T-cell (primary cell): ENCODE measurements at regions of chr3 and their contacts with region 1.

Region 1: GRCh38 chr3:171543759-171544654 is 83.8 kb upstream of the TNIK start:
- DNase-seq: no peak
- ATAC-seq: no peak
- H3K4me3 ChIP-seq: no peak overlapping the region
- H3K4me3 Mint-ChIP-seq: no peak overlapping the region
- H3K27ac ChIP-seq: no peak overlapping the region
- H3K27ac Mint-ChIP-seq: no peak overlapping the region
- H3K4me1 ChIP-seq: peaks cover 0 to 5% of the 10 kb centered on the region in 2 experiments
- H3K4me1 Mint-ChIP-seq: peaks cover 0 to 9% (median 4%) of the 10 kb centered on the region in 3 donors
- H3K27me3 ChIP-seq: no peaks in the 10 kb centered on the region
- H3K27me3 Mint-ChIP-seq: no peaks in the 10 kb centered on the region

Region 2: GRCh38 chr3:171156401-171157067 is 387.5 kb before region 1 on chr3:
- CTCF ChIA-PET with region 1: interaction called in 1 of 2 experiments, 10 read pairs
- POLR2A ChIA-PET with region 1: no interaction called
- DNase-seq: no peak
- ATAC-seq: no peak
- H3K4me3 ChIP-seq: no peak overlapping the region
- H3K4me3 Mint-ChIP-seq: no peak overlapping the region
- H3K27ac ChIP-seq: no peak overlapping the region
- H3K27ac Mint-ChIP-seq: no peak overlapping the region
- H3K4me1 ChIP-seq: no peaks in the 10 kb centered on the region
- H3K4me1 Mint-ChIP-seq: peaks cover 0 to 5% (median 0%) of the 10 kb centered on the region in 3 donors
- H3K27me3 ChIP-seq: no peaks in the 10 kb centered on the region
- H3K27me3 Mint-ChIP-seq: no peaks in the 10 kb centered on the region

Region 3: GRCh38 chr3:171452328-171452727 is 91.7 kb before region 1 on chr3:
- CTCF ChIA-PET with region 1: interaction called in 1 of 2 experiments, 16 read pairs
- POLR2A ChIA-PET with region 1: no interaction called
- DNase-seq: no peak
- ATAC-seq: no peak
- H3K4me3 ChIP-seq: no peak overlapping the region
- H3K4me3 Mint-ChIP-seq: no peak overlapping the region
- H3K27ac ChIP-seq: no peak overlapping the region
- H3K27ac Mint-ChIP-seq: no peak overlapping the region
- H3K4me1 ChIP-seq: peaks cover 23 to 29% of the 10 kb centered on the region in 2 experiments
- H3K4me1 Mint-ChIP-seq: peaks cover 38 to 51% (median 47%) of the 10 kb centered on the region in 3 donors
- H3K27me3 ChIP-seq: no peaks in the 10 kb centered on the region
- H3K27me3 Mint-ChIP-seq: no peaks in the 10 kb centered on the region